Naive thymus-derived CD4-positive, alpha-beta T cell (primary cell): ENCODE measurements at regions of chr5 and their contacts with region 1.

Region 1: GRCh38 chr5:75681125-75681830 is 36.0 kb downstream of the POC5 start:
- DNase-seq: peak in 4 of 9 donors; percentile 24 to 46 (median 38)
- ATAC-seq: peak; percentile 66
- H3K4me3 ChIP-seq: no peak overlapping the region
- H3K4me3 Mint-ChIP-seq: no peak overlapping the region
- H3K27ac ChIP-seq: no peak overlapping the region
- H3K27ac Mint-ChIP-seq: no peak overlapping the region
- H3K4me1 ChIP-seq: peaks cover 0 to 3% of the 10 kb centered on the region in 2 donors
- H3K4me1 Mint-ChIP-seq: peaks cover 7 to 27% (median 18%) of the 10 kb centered on the region in 7 donors
- H3K27me3 ChIP-seq: no peaks in the 10 kb centered on the region
- H3K27me3 Mint-ChIP-seq: no peaks in the 10 kb centered on the region

Region 2: GRCh38 chr5:73902327-73903051 is 1778.8 kb before region 1 on chr5:
- CTCF ChIA-PET with region 1: no interaction called
- POLR2A ChIA-PET with region 1: no interaction called
- intact Hi-C with region 1: loop called (anchors 5 kb)
- DNase-seq: peak in 7 of 9 donors; percentile 10 to 56 (median 51)
- ATAC-seq: no peak
- H3K4me3 ChIP-seq: no peak overlapping the region
- H3K4me3 Mint-ChIP-seq: no peak overlapping the region
- H3K27ac ChIP-seq: no peak overlapping the region
- H3K27ac Mint-ChIP-seq: no peak overlapping the region
- H3K4me1 ChIP-seq: no peaks in the 10 kb centered on the region
- H3K4me1 Mint-ChIP-seq: peaks cover 0 to 5% (median 0%) of the 10 kb centered on the region in 7 donors
- H3K27me3 ChIP-seq: no peaks in the 10 kb centered on the region
- H3K27me3 Mint-ChIP-seq: peaks cover 9 to 35% (median 29%) of the 10 kb centered on the region in 5 donors

Region 3: DNA sequence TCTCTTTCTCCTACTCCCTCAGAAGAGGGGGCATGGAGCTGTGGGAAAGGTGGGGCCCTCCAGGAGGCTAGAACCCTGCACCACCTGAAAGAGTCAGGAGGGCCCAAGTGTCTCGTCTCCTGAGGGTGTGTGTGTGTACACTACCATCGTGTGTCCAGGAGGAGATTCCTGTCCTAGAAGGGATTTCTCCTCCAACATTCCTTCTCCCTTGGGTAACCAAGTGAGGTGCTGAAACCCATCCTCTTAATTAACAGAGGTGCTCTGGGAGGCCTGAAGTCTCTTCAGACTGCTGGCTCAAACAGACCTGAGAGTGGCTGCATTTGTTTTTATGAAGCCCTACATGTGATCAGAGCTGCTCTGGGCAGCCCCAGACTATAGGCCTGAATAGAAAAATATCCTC is 753.9 kb before region 1 on chr5:
- CTCF ChIA-PET with region 1: interaction called, 3 read pairs
- POLR2A ChIA-PET with region 1: no interaction called
- intact Hi-C with region 1: loop called in 1 of 2 experiments (anchors 10 kb)
- DNase-seq: no peak
- ATAC-seq: no peak
- H3K4me3 ChIP-seq: no peak overlapping the region
- H3K4me3 Mint-ChIP-seq: no peak overlapping the region
- H3K27ac ChIP-seq: no peak overlapping the region
- H3K27ac Mint-ChIP-seq: no peak overlapping the region
- H3K4me1 ChIP-seq: no peaks in the 10 kb centered on the region
- H3K4me1 Mint-ChIP-seq: no peaks in the 10 kb centered on the region
- H3K27me3 ChIP-seq: no peaks in the 10 kb centered on the region
- H3K27me3 Mint-ChIP-seq: no peaks in the 10 kb centered on the region

Region 4: DNA sequence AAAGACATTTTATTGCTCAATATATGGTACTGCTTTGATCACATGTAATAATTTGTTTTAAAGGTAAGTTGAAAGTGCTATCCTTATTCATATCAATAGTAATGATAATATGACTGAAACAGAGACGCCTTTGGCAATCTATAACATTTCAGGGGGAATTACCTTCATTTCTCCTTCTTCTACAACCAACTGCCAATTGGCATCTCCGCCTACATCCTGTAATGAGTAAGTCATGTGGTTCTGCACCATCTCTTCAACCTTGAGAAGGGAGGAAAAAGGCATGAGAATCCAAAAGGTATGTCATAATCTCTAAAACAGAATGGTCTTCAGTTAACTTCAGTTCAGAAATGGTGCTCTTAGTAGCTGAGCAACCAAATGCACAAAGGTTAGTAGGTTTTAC is 291.8 kb before region 1 on chr5:
- CTCF ChIA-PET with region 1: no interaction called
- POLR2A ChIA-PET with region 1: no interaction called
- intact Hi-C with region 1: loop called in 1 of 2 experiments (anchors 10 kb)
- DNase-seq: no peak
- ATAC-seq: no peak
- H3K4me3 ChIP-seq: no peak overlapping the region
- H3K4me3 Mint-ChIP-seq: no peak overlapping the region
- H3K27ac ChIP-seq: no peak overlapping the region
- H3K27ac Mint-ChIP-seq: no peak overlapping the region
- H3K4me1 ChIP-seq: no peaks in the 10 kb centered on the region
- H3K4me1 Mint-ChIP-seq: peaks cover 0 to 7% (median 0%) of the 10 kb centered on the region in 7 donors
- H3K27me3 ChIP-seq: no peaks in the 10 kb centered on the region
- H3K27me3 Mint-ChIP-seq: no peaks in the 10 kb centered on the region

Region 5: DNA sequence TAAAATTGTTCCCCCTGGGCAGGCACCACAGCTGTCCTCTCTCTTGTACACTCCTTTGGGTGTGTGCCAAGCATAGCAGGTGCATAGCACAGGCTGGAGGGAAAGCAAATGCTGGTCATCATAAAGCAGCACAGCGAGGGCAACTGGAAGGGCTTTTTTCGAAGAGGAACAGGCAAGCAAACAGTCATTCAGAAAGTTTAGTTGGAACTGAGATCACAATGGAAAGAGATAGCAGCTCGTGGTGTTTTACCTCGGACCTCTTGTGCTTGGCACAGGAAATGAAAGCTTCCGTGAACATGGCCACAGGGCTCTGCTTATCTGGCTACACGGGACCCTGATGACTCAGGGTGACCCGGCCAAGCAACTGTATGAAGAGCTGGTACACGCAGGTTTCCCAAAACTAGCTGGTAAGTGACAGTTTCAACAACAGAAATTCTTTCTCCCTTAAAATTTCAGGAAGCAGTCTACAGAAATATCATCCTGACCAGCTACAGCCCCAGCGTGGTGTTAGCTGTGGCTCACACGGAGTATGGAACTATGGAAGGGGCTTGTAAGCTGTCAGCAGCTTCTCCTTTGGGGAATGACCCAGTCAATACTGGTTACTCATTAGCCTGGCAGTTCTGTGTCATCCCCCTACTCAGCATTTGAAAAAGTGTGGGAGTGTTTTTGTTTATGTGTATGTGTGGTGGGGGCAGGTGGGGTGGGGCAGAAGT is 12.1 kb before region 1 on chr5:
- CTCF ChIA-PET with region 1: interaction called, 4 read pairs
- POLR2A ChIA-PET with region 1: no interaction called
- intact Hi-C with region 1: loop called in 1 of 2 experiments (anchors 1 kb)
- DNase-seq: peak in 3 of 9 donors; percentile 3 to 61 (median 10)
- ATAC-seq: peak; percentile 90
- H3K4me3 ChIP-seq: peak overlapping the region; percentile 52
- H3K4me3 Mint-ChIP-seq: peak overlapping the region; percentile 71 to 91 (median 84)
- H3K27ac ChIP-seq: peak overlapping the region; percentile 42
- H3K27ac Mint-ChIP-seq: peak overlapping the region; percentile 3 to 91 (median 64)
- H3K4me1 ChIP-seq: peaks cover 0 to 11% of the 10 kb centered on the region in 2 donors
- H3K4me1 Mint-ChIP-seq: peaks cover 7 to 26% (median 15%) of the 10 kb centered on the region in 7 donors
- H3K27me3 ChIP-seq: no peaks in the 10 kb centered on the region
- H3K27me3 Mint-ChIP-seq: no peaks in the 10 kb centered on the region